ENCODE measurements at regions of chr10 and their contacts with region 1.

Region 1: GRCh38 chr10:97025613-97026242 is 160.0 kb downstream of the SLIT1 start:
- DNase-seq: peak; percentile 68

Region 2: GRCh38 chr10:96765406-96766240 is 260.1 kb before region 1 on chr10:
- intact Hi-C with region 1: loop called (anchors 2 kb)
- DNase-seq: peak; percentile 84

Region 3: DNA sequence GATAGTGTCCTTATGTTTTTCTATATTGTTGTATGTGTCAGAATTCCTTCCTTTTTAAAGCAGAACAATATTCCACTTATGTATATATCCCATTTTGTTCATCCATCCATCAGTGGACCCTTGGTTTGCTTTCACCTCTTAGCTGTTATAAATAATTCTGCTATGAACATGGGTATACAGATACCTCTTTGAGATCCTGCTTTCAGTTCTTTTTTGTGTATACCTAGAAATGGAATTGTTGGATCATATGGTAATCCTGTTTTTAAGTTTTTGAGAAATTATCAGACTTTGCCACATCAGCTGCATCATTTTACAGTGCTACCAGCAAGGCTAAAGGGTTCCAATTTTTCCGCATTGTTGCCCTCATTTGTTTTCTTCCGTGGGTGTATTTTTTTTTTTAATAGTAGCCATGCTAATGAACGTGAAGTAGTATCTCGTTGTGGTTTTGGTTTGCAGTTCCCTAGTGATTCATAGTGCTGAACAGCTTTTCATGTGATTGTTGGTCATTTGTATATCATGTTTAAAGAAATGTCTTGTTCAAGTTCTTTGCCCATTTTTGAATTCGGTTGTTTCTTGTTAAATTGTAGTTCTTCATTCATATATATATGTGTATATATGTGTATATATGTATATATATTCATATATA is 105.8 kb before region 1 on chr10:
- intact Hi-C with region 1: loop called (anchors 5 kb)
- DNase-seq: no peak